ENCODE measurements at regions of chr11 and their contacts with region 1.

Region 1: GRCh38 chr11:43852057-43852636 is 28.5 kb upstream of the ALKBH3 start:
- DNase-seq: no peak
- ATAC-seq: no peak

Region 2: GRCh38 chr11:43504316-43504950 is 347.7 kb before region 1 on chr11:
- intact Hi-C with region 1: loop called (anchors 10 kb)
- DNase-seq: no peak
- ATAC-seq: peak; percentile 34

Region 3: GRCh38 chr11:43579171-43579918 is 272.8 kb before region 1 on chr11:
- intact Hi-C with region 1: loop called (anchors 5 kb)
- DNase-seq: peak; percentile 58
- ATAC-seq: no peak

Measured in Right ventricle myocardium inferior (tissue), 1 donor.